ENCODE measurements at regions of chr12 and their contacts with region 1.

Region 1: DNA sequence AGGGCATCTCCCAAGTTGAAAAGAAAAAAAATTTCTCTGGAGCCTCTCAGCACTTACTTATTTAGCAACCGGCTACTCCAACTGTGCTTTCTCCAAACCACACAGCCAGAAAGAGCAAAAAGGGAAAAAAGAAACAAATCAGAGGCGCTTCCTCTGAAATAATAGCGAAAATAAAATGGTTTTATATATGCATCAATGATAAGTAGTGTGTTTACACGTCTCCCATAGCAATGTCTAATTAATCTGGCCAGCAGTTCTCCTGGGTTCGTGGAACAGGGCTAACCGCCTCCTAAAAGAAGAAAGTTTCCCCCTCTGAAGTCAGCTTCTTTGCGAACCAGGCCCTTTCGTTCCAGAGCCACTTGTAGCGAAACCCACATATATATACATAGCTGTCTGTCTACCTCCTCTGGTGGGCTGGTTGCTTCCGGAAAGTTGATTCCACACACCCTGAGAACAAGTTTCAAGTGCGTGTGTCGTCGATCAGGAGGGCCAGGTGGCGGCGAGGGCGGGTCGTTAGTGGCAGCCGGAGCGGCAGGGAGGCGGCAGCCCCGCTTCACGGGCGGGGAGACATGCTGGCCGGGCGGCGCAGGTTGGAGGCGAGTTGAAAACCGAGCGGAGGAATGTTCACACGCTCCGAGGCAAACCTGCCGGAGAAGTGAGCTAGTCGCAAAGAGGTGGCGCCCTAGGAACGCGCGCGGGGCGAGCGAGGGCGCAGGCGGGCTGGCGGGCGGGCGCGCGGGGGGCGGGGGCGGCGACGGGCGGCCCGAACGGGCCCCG is 2.7 kb downstream of the PTHLH start:
- DNase-seq: peak; percentile 75
- H3K4me3 Mint-ChIP-seq: peak overlapping the region; percentile 82
- H3K27ac Mint-ChIP-seq: peak overlapping the region; percentile 10
- H3K4me1 Mint-ChIP-seq: peaks cover 15% of the 10 kb centered on the region
- H3K27me3 Mint-ChIP-seq: peaks cover 86% of the 10 kb centered on the region

Region 2: GRCh38 chr12:27821259-27821973 is 148.4 kb before region 1 on chr12:
- intact Hi-C with region 1: no loop called
- DNase-seq: peak; percentile 85
- H3K4me3 Mint-ChIP-seq: peak overlapping the region; percentile 6
- H3K27ac Mint-ChIP-seq: peak overlapping the region; percentile 87
- H3K4me1 Mint-ChIP-seq: peaks cover 36% of the 10 kb centered on the region
- H3K27me3 Mint-ChIP-seq: peaks cover 52% of the 10 kb centered on the region

Region 3: GRCh38 chr12:28872654-28873268 is 902.9 kb after region 1 on chr12:
- intact Hi-C with region 1: loop called (anchors 10 kb)
- DNase-seq: peak; percentile 63
- H3K4me3 Mint-ChIP-seq: no peak overlapping the region
- H3K27ac Mint-ChIP-seq: no peak overlapping the region
- H3K4me1 Mint-ChIP-seq: no peaks in the 10 kb centered on the region
- H3K27me3 Mint-ChIP-seq: no peaks in the 10 kb centered on the region